HCT116 (cell line): ENCODE measurements at regions of chr20 and their contacts with region 1.

Region 1: GRCh38 chr20:60050158-60050947 is 92.1 kb downstream of the CDH26 start:
- DNase-seq: peak; percentile 26
- ATAC-seq: peak; percentile 96
- H3K4me3 ChIP-seq: no peak overlapping the region
- H3K27ac ChIP-seq: no peak overlapping the region
- H3K4me1 ChIP-seq: no peaks in the 10 kb centered on the region
- H3K27me3 ChIP-seq: peaks cover 27% of the 10 kb centered on the region
- CTCF ChIP-seq: peak; percentile 66 to 74 (median 71); a peak in 5 of 6 replicates
- POLR2A ChIP-seq: no peak
- RAD21 ChIP-seq: peak; percentile 60

Region 2: GRCh38 chr20:59948828-59949720 is 101.3 kb before region 1 on chr20:
- CTCF ChIA-PET with region 1: interaction called, 27 read pairs
- POLR2A ChIA-PET with region 1: no interaction called
- RAD21 ChIA-PET with region 1: no interaction called
- intact Hi-C with region 1: loop called (anchors 1 kb)
- DNase-seq: peak; percentile 29
- ATAC-seq: no peak
- H3K4me3 ChIP-seq: no peak overlapping the region
- H3K27ac ChIP-seq: no peak overlapping the region
- H3K4me1 ChIP-seq: no peaks in the 10 kb centered on the region
- H3K27me3 ChIP-seq: no peaks in the 10 kb centered on the region
- CTCF ChIP-seq: peak; percentile 33 to 70 (median 52); a peak in 5 of 6 replicates
- POLR2A ChIP-seq: no peak
- RAD21 ChIP-seq: peak; percentile 60

Region 3: DNA sequence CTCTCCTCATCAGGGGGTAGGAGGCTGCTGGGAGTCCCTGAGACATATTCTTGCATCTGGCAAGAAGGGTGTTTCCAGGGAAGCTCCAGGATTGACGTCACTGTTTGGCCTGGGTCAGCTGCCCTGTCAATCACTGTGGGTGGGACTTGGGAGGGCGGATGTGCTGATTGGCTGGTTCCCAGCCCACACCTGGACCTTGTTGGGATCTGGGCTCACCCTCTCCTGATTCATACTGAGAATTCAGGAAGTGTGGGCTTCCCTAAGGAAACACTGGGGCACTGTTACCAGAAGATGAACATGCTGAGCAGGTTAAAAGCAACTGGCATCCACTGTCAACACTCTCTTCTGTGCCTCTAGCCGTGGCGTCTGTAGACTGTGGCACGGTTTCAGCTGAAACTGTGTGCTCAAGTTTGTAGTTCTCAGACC is 55.6 kb before region 1 on chr20:
- CTCF ChIA-PET with region 1: interaction called, 22 read pairs
- POLR2A ChIA-PET with region 1: no interaction called
- RAD21 ChIA-PET with region 1: no interaction called
- intact Hi-C with region 1: loop called (anchors 1 kb)
- DNase-seq: peak; percentile 55
- ATAC-seq: peak; percentile 86
- H3K4me3 ChIP-seq: no peak overlapping the region
- H3K27ac ChIP-seq: no peak overlapping the region
- H3K4me1 ChIP-seq: peaks cover 7 to 12% of the 10 kb centered on the region in 2 experiments
- H3K27me3 ChIP-seq: peaks cover 6% of the 10 kb centered on the region; the same call in 1 of the 2 replicates
- CTCF ChIP-seq: no peak
- POLR2A ChIP-seq: no peak
- RAD21 ChIP-seq: no peak

Region 4: GRCh38 chr20:60152792-60153191 is 102.4 kb after region 1 on chr20:
- CTCF ChIA-PET with region 1: no interaction called
- POLR2A ChIA-PET with region 1: no interaction called
- RAD21 ChIA-PET with region 1: no interaction called
- intact Hi-C with region 1: no loop called
- DNase-seq: no peak
- ATAC-seq: no peak
- H3K4me3 ChIP-seq: no peak overlapping the region
- H3K27ac ChIP-seq: no peak overlapping the region
- H3K4me1 ChIP-seq: no peaks in the 10 kb centered on the region
- H3K27me3 ChIP-seq: peaks cover 6% of the 10 kb centered on the region; the same call in 1 of the 2 replicates
- CTCF ChIP-seq: no peak
- POLR2A ChIP-seq: no peak
- RAD21 ChIP-seq: no peak